GM12878 (cell line): ENCODE measurements at regions of chr1 and their contacts with region 1.

Region 1: DNA sequence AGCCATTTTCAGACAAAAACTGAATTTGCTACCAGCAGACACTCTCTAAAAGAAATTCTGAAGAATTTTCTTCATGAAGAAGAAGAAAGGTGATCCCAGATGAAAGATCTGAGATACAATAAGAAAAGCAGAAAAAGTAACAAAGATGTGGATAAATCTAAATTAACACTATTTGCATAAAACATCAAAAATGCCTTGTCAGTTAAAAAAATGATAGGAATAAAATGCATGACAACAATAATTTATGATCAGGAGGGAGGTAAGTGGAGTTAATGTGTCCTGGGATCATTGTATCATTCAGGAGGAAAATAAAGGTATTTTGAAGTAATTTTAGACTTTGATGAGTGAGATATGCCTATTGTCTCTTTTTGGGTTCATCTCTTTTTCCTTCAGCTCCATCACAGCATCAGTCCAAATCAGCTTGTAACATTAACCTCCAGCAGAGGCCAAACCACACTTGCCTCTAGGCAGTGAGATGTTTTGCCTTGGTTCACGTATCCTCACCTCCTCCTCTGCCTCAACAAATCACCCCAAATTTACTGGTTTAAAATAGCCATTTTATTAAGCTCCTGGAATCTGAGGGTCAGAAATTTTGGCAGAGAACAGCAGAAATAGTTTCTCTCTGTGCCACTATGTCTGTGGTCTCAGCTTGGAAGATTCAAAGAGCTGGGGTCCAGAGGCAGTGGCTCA is 76.9 kb upstream of the HIVEP3 start:
- DNase-seq: no peak
- ATAC-seq: no peak
- H3K4me3 ChIP-seq: no peak overlapping the region
- H3K27ac ChIP-seq: no peak overlapping the region
- H3K4me1 ChIP-seq: peaks cover 4% of the 10 kb centered on the region; the same call in 1 of the 2 replicates
- H3K27me3 ChIP-seq: no peaks in the 10 kb centered on the region
- CTCF ChIP-seq: no peak
- EP300 ChIP-seq: no peak
- POLR2A ChIP-seq: no peak
- RAD21 ChIP-seq: no peak

Region 2: DNA sequence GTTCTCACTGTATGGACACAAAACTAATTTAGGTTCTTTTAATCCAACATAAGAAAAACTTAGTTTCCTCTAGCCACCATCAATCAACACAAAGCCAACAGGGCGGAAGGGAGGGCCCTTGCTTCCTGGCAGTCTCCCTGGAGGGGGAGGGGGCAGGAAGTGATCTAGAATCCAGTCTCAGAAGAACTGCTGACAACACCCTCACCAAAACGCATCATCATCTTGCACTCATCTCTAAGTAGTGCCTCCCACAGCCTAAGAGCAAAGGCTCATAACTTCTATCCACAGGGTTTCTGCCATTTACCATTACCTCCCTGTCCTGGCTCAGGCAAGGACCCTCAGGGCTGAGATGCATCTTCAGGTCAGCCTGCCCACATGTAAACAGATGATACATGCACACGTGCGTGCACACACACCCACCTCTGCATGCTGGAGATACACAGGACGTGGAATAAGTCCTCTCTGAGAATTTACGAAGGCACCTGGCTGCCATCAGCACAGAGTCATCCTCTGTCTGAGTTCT is 97.3 kb before region 1 on chr1:
- CTCF ChIA-PET with region 1: no interaction called
- POLR2A ChIA-PET with region 1: no interaction called
- RAD21 ChIA-PET with region 1: no interaction called
- SMC1A ChIA-PET with region 1: no interaction called
- in situ Hi-C with region 1: no loop called
- intact Hi-C with region 1: no loop called
- DNase-seq: no peak
- ATAC-seq: no peak; the same call in 1 of the 3 replicates
- H3K4me3 ChIP-seq: no peak overlapping the region
- H3K27ac ChIP-seq: no peak overlapping the region
- H3K4me1 ChIP-seq: peaks cover 3% of the 10 kb centered on the region; the same call in 1 of the 2 replicates
- H3K27me3 ChIP-seq: no peaks in the 10 kb centered on the region
- CTCF ChIP-seq: no peak
- EP300 ChIP-seq: no peak
- POLR2A ChIP-seq: no peak
- RAD21 ChIP-seq: no peak

Region 3: GRCh38 chr1:42006836-42007235 is 11.2 kb after region 1 on chr1:
- CTCF ChIA-PET with region 1: interaction called, 4 read pairs
- POLR2A ChIA-PET with region 1: no interaction called
- RAD21 ChIA-PET with region 1: no interaction called
- SMC1A ChIA-PET with region 1: interaction called, 11 read pairs
- in situ Hi-C with region 1: no loop called
- intact Hi-C with region 1: no loop called
- DNase-seq: no peak
- ATAC-seq: peak; percentile 47
- H3K4me3 ChIP-seq: no peak overlapping the region
- H3K27ac ChIP-seq: peak overlapping the region; percentile 79
- H3K4me1 ChIP-seq: peaks cover 34% of the 10 kb centered on the region
- H3K27me3 ChIP-seq: no peaks in the 10 kb centered on the region
- CTCF ChIP-seq: no peak
- EP300 ChIP-seq: no peak
- POLR2A ChIP-seq: no peak
- RAD21 ChIP-seq: 0 out of 2 replicates have a peak, but pooled peaks have one; percentile 2

Region 4: GRCh38 chr1:42368096-42368795 is 372.7 kb after region 1 on chr1:
- CTCF ChIA-PET with region 1: no interaction called
- POLR2A ChIA-PET with region 1: no interaction called
- RAD21 ChIA-PET with region 1: no interaction called
- SMC1A ChIA-PET with region 1: no interaction called
- in situ Hi-C with region 1: no loop called
- intact Hi-C with region 1: no loop called
- DNase-seq: no peak
- ATAC-seq: no peak
- H3K4me3 ChIP-seq: no peak overlapping the region
- H3K27ac ChIP-seq: no peak overlapping the region
- H3K4me1 ChIP-seq: no peaks in the 10 kb centered on the region
- H3K27me3 ChIP-seq: peaks cover 2 to 3% of the 10 kb centered on the region in 2 experiments; a peak in 2 of 4 replicates
- CTCF ChIP-seq: no peak
- EP300 ChIP-seq: no peak
- POLR2A ChIP-seq: no peak
- RAD21 ChIP-seq: no peak